CD4-positive, alpha-beta T cell (primary cell): ENCODE measurements at regions of chr4 and their contacts with region 1.

Region 1: DNA sequence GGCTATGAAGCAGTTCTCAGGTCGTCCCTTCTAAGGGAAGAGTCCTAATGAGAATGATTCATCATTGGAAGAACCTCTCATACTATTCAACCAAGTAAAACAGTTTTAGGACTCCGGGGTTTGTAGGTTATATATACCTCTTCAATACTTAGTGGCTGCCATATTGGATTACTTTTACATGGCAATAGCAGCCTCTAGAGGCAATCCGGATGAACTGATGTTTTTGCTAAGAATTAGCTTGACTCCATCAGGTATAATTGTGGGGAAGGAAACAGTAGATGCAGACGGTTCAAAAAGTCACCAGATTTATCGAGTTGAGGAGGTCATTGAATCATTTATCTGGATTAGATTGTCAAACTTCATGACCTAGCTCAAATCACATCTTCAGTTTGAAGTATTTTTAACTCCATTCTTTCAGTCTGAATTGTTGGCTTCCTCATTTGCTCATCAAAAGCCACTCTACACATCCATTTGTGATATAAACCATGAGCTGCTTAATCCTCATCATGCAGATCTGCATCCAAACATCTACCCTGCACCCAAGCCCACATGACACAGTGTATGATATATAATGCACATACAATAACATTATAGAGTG is 28.4 kb downstream of the GUCY1B1 start:
- DNase-seq: peak in 3 of 14 experiments; percentile 31 to 53 (median 39)
- ATAC-seq: peak; percentile 48
- H3K4me3 ChIP-seq: no peak overlapping the region
- H3K4me3 Mint-ChIP-seq: no peak overlapping the region
- H3K27ac ChIP-seq: no peak overlapping the region
- H3K27ac Mint-ChIP-seq: no peak overlapping the region
- H3K4me1 ChIP-seq: no peaks in the 10 kb centered on the region
- H3K4me1 Mint-ChIP-seq: peaks cover 6% of the 10 kb centered on the region
- H3K27me3 ChIP-seq: no peaks in the 10 kb centered on the region
- H3K27me3 Mint-ChIP-seq: no peaks in the 10 kb centered on the region
- CTCF ChIP-seq: no peak

Region 2: GRCh38 chr4:154807042-154807630 is 980.1 kb before region 1 on chr4:
- CTCF ChIA-PET with region 1: no interaction called
- POLR2A ChIA-PET with region 1: no interaction called
- intact Hi-C with region 1: loop called in 1 of 2 experiments (anchors 5 kb)
- DNase-seq: peak in 3 of 14 experiments; percentile 13 to 17 (median 15)
- ATAC-seq: no peak
- H3K4me3 ChIP-seq: no peak overlapping the region
- H3K4me3 Mint-ChIP-seq: no peak overlapping the region
- H3K27ac ChIP-seq: no peak overlapping the region
- H3K27ac Mint-ChIP-seq: no peak overlapping the region
- H3K4me1 ChIP-seq: no peaks in the 10 kb centered on the region
- H3K4me1 Mint-ChIP-seq: no peaks in the 10 kb centered on the region
- H3K27me3 ChIP-seq: no peaks in the 10 kb centered on the region
- H3K27me3 Mint-ChIP-seq: peaks cover 14% of the 10 kb centered on the region
- CTCF ChIP-seq: peak; percentile 38

Region 3: DNA sequence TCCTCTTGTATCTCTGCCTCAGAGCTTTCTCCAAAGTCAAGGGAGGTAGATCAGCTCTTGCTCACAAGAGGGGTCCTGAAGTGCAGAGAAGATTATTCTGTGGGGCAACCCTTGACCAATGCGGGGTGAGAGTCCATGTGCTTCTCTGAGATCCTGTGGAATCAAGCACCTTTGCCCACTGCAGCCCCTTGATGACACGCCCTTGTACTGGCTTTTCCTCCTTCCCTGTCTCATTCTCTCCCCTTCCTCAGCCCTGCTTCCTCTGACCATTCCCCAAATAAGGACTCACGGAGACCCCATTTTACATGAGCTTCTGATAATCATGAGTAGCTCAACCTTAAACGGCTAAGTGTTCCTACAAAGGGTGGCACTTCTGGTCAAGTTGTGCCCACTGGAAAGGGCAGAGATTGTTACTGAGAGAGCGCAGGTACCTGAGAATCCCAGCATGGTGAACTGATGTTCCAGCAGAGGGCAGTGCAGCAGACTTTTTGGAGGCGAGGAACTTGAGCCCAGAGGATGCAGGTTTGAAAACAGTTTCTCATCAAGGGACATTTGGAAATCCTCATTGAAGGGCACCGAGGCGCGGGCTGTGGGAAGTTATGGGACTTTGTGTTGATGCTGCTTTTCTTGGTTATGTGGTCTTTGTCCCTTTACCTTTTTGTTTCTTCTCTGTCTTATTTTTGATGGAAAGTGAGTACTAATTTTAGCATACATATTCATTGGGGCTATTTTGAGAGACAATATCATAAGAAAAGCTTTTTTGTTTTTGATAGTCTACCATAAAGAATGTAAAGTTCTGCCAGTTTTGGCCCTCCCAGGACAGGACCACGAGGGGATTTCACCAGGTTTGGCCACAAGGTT is 804.8 kb before region 1 on chr4:
- CTCF ChIA-PET with region 1: no interaction called
- POLR2A ChIA-PET with region 1: no interaction called
- intact Hi-C with region 1: loop called in 1 of 2 experiments (anchors 10 kb)
- DNase-seq: peak in 9 of 14 experiments; percentile 1 to 40 (median 5)
- ATAC-seq: no peak
- H3K4me3 ChIP-seq: no peak overlapping the region
- H3K4me3 Mint-ChIP-seq: no peak overlapping the region
- H3K27ac ChIP-seq: no peak overlapping the region
- H3K27ac Mint-ChIP-seq: no peak overlapping the region
- H3K4me1 ChIP-seq: no peaks in the 10 kb centered on the region
- H3K4me1 Mint-ChIP-seq: no peaks in the 10 kb centered on the region
- H3K27me3 ChIP-seq: no peaks in the 10 kb centered on the region
- H3K27me3 Mint-ChIP-seq: no peaks in the 10 kb centered on the region
- CTCF ChIP-seq: peak; percentile 27

Region 4: GRCh38 chr4:155442267-155443105 is 344.7 kb before region 1 on chr4:
- CTCF ChIA-PET with region 1: no interaction called
- POLR2A ChIA-PET with region 1: no interaction called
- intact Hi-C with region 1: loop called (anchors 2 to 5 kb)
- DNase-seq: peak; percentile 11 to 69 (median 30)
- ATAC-seq: no peak
- H3K4me3 ChIP-seq: no peak overlapping the region
- H3K4me3 Mint-ChIP-seq: no peak overlapping the region
- H3K27ac ChIP-seq: no peak overlapping the region
- H3K27ac Mint-ChIP-seq: no peak overlapping the region
- H3K4me1 ChIP-seq: no peaks in the 10 kb centered on the region
- H3K4me1 Mint-ChIP-seq: no peaks in the 10 kb centered on the region
- H3K27me3 ChIP-seq: peaks cover 0 to 3% of the 10 kb centered on the region in 2 experiments
- H3K27me3 Mint-ChIP-seq: peaks cover 14% of the 10 kb centered on the region
- CTCF ChIP-seq: peak; percentile 82

Region 5: DNA sequence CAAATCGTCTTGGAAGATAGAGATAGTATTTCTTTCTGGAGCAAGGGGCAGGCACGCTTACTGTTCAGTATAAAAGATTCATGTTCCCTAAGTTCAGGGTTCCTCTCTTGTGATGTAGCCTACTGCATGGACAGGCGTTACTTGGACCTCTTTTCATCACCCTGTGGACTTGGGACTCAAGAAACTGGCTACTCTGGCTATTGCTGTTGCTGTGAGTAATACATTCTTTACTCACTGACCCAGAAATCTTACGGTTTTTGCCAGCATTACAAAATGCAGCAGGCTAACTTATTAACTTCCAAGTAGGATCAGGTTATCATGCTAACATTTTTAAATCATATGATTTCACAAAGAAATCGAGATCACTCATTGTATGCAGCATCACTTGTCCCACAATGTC is 41.2 kb before region 1 on chr4:
- CTCF ChIA-PET with region 1: no interaction called
- POLR2A ChIA-PET with region 1: no interaction called
- intact Hi-C with region 1: no loop called
- DNase-seq: no peak
- ATAC-seq: no peak
- H3K4me3 ChIP-seq: no peak overlapping the region
- H3K4me3 Mint-ChIP-seq: no peak overlapping the region
- H3K27ac ChIP-seq: no peak overlapping the region
- H3K27ac Mint-ChIP-seq: no peak overlapping the region
- H3K4me1 ChIP-seq: no peaks in the 10 kb centered on the region
- H3K4me1 Mint-ChIP-seq: no peaks in the 10 kb centered on the region
- H3K27me3 ChIP-seq: no peaks in the 10 kb centered on the region
- H3K27me3 Mint-ChIP-seq: no peaks in the 10 kb centered on the region
- CTCF ChIP-seq: no peak